ENCODE measurements at regions of chr19 and their contacts with region 1.

Region 1: DNA sequence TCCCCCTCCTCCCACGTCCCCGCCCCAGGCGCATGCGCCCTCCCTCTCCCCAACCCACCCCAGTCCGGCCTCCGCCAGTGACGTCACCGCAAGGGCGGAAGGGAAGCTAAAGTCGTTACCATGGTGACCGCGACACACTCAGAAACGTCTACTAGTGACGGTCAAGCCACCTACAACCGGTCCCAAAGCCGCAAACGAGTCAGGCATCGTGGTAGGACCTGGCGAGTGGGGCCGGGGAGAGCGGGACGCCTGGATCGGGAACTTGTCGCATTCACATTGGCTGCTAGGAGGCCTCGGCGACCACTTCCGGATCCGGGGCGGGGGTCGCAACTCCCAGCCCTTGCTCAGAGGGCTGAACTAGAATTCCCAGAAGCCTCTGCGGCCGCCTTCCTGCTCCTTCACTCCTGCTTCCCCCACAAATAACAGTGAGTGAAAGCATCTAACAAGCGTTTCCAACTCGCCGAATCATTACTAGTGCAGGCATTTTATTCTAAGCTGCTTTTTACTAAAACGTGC is at the start of gene ZSCAN5A:
- DNase-seq: peak; percentile 96
- H3K4me3 Mint-ChIP-seq: peak within 1 kb of the TSS; percentile 95
- H3K27ac Mint-ChIP-seq: peak within 1 kb of the TSS; percentile 99
- H3K4me1 Mint-ChIP-seq: peaks cover 14% of the 10 kb centered on the region
- H3K27me3 Mint-ChIP-seq: no peaks in the 10 kb centered on the region
- CTCF ChIP-seq: no peak
- total RNA-seq, gene ZSCAN5A: 13.5 and 14.9 TPM in 2 replicates

Region 2: DNA sequence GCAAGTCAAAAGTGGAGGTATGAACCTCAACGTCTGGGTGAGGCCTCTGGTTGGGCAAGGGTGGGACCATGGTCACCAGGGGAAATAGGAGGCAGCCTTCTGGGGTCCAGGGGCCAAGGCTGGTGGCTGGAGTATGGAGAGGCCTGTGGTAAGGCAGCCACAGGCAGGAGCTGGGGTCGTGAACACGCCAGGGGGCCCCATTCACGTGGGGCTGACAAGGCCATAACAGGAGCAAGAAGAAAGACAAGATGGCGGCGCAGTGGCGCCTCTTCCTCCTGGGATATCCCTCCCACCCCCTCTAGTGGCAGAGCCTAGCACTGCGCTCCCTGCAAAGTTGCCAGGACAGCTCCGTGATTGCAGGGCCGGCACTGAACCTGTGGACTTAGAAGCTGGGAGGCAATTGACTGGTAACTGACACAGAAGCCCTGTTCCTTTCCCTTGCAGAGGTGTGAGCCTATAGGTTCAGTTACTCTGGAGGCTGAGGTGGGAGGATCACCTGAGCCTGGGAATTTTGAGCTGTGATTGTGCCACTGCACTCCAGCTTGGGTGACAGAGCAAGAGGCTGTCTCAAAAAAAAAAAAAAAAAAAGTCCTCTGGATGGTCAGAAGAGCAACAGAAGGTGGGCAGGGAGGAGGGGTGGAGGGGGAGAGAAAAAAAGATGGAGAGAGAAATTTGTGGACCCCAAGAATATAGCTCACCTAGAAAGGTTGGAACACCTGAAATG is 61.8 kb before region 1 on chr19:
- CTCF ChIA-PET with region 1: interaction called, 12 read pairs
- intact Hi-C with region 1: loop called (anchors 5 kb)
- DNase-seq: peak; percentile 91
- H3K4me3 Mint-ChIP-seq: no peak overlapping the region
- H3K27ac Mint-ChIP-seq: peak overlapping the region; percentile 39
- H3K4me1 Mint-ChIP-seq: no peaks in the 10 kb centered on the region
- H3K27me3 Mint-ChIP-seq: no peaks in the 10 kb centered on the region
- CTCF ChIP-seq: peak; percentile 88